Naive thymus-derived CD4-positive, alpha-beta T cell (primary cell): ENCODE measurements at regions of chr2 and their contacts with region 1.

Region 1: GRCh38 chr2:9630749-9631483 is at the start of gene YWHAQ:
- DNase-seq: peak; percentile 92 to 98 (median 96)
- ATAC-seq: peak; percentile 95
- H3K4me3 ChIP-seq: peak within 1 kb of the TSS; percentile 75
- H3K4me3 Mint-ChIP-seq: peak within 1 kb of the TSS; percentile 90 to 99 (median 96)
- H3K27ac ChIP-seq: peak within 1 kb of the TSS; percentile 94
- H3K27ac Mint-ChIP-seq: peak within 1 kb of the TSS; percentile 78 to 97 (median 94)
- H3K4me1 ChIP-seq: peaks cover 13 to 22% of the 10 kb centered on the region in 2 donors
- H3K4me1 Mint-ChIP-seq: peaks cover 39 to 52% (median 51%) of the 10 kb centered on the region in 7 donors
- H3K27me3 ChIP-seq: no peaks in the 10 kb centered on the region
- H3K27me3 Mint-ChIP-seq: peaks cover 0 to 15% (median 0%) of the 10 kb centered on the region in 5 donors
- total RNA-seq, gene YWHAQ: 67.3 to 189 (median 83.3) TPM

Region 2: DNA sequence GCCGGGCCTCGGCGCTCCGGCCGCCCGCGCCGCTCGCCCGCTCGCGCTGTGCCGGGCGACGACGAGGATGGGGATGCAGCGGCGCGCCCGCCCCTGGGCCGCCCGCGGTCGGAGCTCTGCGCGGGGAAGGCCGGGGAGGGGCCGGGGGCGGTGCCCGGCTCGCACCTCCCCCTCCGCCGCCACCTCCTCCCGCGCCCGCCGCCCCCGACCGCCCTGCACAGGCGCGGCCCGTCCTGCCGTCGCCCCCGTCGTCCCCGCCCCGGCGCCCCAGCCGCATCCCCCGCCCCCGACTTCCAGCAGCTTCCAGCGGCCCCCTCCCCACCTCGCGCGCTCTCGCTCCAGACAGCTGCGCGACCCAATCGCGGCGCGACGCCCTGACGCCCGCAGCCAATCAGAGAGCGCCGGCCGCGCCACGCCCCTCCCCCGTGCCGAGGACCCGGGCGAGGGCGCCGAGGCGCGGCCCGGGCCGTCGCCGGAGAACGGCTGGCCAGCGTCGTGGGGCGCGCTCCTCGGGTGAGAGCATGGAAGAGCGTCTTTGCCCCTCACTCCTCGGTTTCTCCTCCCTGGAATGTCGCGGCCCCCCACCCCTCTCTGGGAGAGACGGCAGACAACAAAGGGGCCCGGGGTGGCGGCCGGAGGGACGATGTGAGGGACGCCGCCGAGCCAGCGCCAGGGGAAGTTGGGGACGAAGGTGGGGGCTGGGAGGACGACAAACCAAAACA is 627.1 kb before region 1 on chr2 and contains the start of gene MBOAT2:
- CTCF ChIA-PET with region 1: no interaction called
- POLR2A ChIA-PET with region 1: no interaction called
- intact Hi-C with region 1: loop called in 1 of 2 experiments (anchors 5 kb)
- DNase-seq: peak; percentile 60 to 84 (median 71)
- ATAC-seq: peak; percentile 92
- H3K4me3 ChIP-seq: peak within 1 kb of the TSS; percentile 60
- H3K4me3 Mint-ChIP-seq: peak within 1 kb of the TSS; percentile 77 to 92 (median 86)
- H3K27ac ChIP-seq: peak within 1 kb of the TSS; percentile 62
- H3K27ac Mint-ChIP-seq: peak within 1 kb of the TSS in 8 of 9 donors; percentile 56 to 86 (median 76)
- H3K4me1 ChIP-seq: peaks cover 0 to 3% of the 10 kb centered on the region in 2 donors
- H3K4me1 Mint-ChIP-seq: peaks cover 13 to 25% (median 22%) of the 10 kb centered on the region in 7 donors
- H3K27me3 ChIP-seq: peaks cover 0 to 3% of the 10 kb centered on the region in 2 donors
- H3K27me3 Mint-ChIP-seq: peaks cover 0 to 18% (median 4%) of the 10 kb centered on the region in 5 donors
- total RNA-seq, gene MBOAT2: 1.4 to 6.0 (median 2.3) TPM

Region 3: GRCh38 chr2:9440058-9440727 is 190.7 kb before region 1 on chr2:
- CTCF ChIA-PET with region 1: no interaction called
- POLR2A ChIA-PET with region 1: no interaction called
- intact Hi-C with region 1: no loop called
- DNase-seq: no peak
- ATAC-seq: no peak
- H3K4me3 ChIP-seq: no peak overlapping the region
- H3K4me3 Mint-ChIP-seq: no peak overlapping the region
- H3K27ac ChIP-seq: no peak overlapping the region
- H3K27ac Mint-ChIP-seq: no peak overlapping the region
- H3K4me1 ChIP-seq: no peaks in the 10 kb centered on the region
- H3K4me1 Mint-ChIP-seq: peaks cover 0 to 4% (median 0%) of the 10 kb centered on the region in 7 donors
- H3K27me3 ChIP-seq: no peaks in the 10 kb centered on the region
- H3K27me3 Mint-ChIP-seq: no peaks in the 10 kb centered on the region

Region 4: DNA sequence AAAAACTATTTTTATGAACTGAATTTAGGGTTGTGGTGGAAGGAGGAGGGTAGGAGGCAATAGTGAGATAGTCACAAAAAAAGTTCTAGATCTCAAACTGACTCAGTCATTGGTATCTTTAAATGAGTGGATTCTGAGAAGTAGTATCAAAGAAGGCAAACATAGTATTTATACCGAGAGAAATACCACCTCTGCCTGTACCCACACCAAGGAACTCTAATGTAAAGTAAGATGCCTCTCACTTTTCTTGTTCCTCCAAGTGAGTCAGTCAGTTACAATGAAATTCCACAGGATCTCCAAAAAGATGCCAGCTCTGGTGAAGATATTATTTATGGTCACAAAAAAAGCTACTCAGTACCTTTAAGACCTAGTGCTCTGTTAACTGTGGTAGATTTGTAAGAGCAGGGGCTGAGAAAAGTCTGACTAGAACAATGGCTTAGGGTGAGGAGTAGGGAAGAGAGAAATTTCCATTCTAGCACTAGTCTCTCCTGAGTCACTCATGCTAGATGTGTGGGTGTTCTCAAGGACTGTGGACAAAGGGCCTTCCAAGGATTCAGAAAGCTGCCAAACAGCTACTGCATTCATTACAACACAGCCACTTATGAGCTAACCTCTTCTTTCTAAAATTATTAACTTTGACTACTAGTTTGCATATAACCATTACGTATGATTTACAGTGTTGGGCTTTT is 36.4 kb before region 1 on chr2:
- CTCF ChIA-PET with region 1: no interaction called
- POLR2A ChIA-PET with region 1: no interaction called
- intact Hi-C with region 1: loop called in 1 of 2 experiments (anchors 5 kb)
- DNase-seq: no peak
- ATAC-seq: peak; percentile 14
- H3K4me3 ChIP-seq: no peak overlapping the region
- H3K4me3 Mint-ChIP-seq: peak overlapping the region in 1 of 10 donors; percentile 54
- H3K27ac ChIP-seq: no peak overlapping the region
- H3K27ac Mint-ChIP-seq: peak overlapping the region in 5 of 9 donors; percentile 0 to 53 (median 23)
- H3K4me1 ChIP-seq: peaks cover 4 to 22% of the 10 kb centered on the region in 2 donors
- H3K4me1 Mint-ChIP-seq: peaks cover 24 to 56% (median 43%) of the 10 kb centered on the region in 7 donors
- H3K27me3 ChIP-seq: no peaks in the 10 kb centered on the region
- H3K27me3 Mint-ChIP-seq: no peaks in the 10 kb centered on the region

Region 5: DNA sequence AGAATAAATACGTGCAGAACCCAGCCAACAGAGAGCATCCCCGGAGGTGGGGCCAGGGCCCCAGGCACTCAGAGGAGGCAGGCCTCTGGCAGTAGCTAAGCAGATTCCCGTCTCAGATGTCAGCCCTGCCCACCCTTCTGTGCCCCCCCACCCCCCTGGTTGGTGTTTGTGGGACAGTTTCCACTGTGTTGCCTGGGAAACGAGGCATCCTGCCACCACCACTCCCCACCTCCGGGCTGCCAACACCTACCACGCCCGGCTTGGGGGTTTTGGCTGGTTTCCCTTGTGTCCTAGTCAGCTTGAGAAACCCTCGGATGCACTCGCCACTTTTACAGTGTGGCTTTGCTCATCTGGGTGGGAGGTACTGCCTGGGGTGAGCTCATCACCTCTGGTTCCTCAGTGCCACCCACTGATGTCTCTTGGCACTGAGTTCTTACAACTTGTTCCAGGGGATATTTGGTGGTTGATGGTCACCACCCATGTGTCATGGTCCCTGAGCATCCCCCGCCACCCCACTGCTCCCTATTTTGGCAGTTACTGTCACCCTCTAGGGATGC is 72.2 kb after region 1 on chr2:
- CTCF ChIA-PET with region 1: no interaction called
- POLR2A ChIA-PET with region 1: no interaction called
- intact Hi-C with region 1: loop called (anchors 1 to 5 kb)
- DNase-seq: peak in 8 of 9 donors; percentile 7 to 77 (median 44)
- ATAC-seq: peak; percentile 90
- H3K4me3 ChIP-seq: peak overlapping the region; percentile 16
- H3K4me3 Mint-ChIP-seq: peak overlapping the region in 2 of 10 donors; percentile 23 to 26
- H3K27ac ChIP-seq: no peak overlapping the region
- H3K27ac Mint-ChIP-seq: peak overlapping the region in 1 of 9 donors; percentile 78
- H3K4me1 ChIP-seq: peaks cover 7 to 31% of the 10 kb centered on the region in 2 donors
- H3K4me1 Mint-ChIP-seq: peaks cover 8 to 39% (median 13%) of the 10 kb centered on the region in 7 donors
- H3K27me3 ChIP-seq: no peaks in the 10 kb centered on the region
- H3K27me3 Mint-ChIP-seq: peaks cover 0 to 4% (median 0%) of the 10 kb centered on the region in 5 donors

Region 6: DNA sequence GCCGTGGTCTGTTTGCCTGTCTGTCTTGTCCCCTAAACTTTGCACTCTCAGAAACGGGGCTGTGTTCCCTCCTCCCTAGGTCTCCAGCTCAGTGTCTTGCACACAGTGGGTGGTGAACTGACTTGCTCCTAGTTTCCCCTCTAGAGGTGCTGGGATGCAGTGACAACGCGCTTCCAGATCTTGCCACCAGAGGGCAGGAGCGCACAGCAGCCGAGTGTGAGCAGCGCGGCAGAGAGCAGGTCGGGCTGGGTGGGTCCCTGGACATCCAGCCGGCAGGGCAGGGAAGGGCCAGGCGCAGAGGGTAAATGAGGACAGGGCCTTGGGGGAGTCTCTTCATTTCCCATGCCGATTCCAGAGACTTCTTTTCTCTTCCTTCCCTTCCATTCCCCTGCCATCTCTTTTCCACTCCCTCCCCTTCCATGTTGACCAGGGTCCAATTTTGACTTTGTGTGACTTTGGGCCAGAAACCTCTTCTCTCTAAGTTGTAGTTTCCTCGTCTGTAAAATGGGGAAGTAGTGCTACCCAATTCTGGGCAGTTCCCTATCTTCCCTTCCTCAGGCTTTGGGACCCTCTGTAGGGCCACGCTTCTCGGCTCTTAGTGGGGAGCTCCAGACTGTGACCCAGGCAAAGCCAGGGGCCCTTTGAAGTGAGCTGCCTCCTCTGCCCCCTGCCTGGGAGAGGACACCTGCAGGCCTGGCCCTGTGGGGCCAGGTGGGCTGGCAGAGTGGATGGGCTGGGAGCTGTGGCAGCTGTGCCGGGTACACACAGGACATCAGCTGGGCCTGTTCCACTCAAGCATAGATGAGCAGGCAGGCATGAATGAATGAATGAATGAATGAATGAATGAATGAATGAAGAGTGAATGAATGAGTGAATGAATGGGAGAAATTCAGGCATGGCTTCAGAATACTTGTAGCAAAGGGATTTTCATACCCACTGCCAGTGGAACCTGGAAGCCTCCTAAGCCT is 169.0 kb after region 1 on chr2:
- CTCF ChIA-PET with region 1: no interaction called
- POLR2A ChIA-PET with region 1: no interaction called
- intact Hi-C with region 1: loop called in 1 of 2 experiments (anchors 1 kb)
- DNase-seq: peak; percentile 55 to 89 (median 76)
- ATAC-seq: peak; percentile 91
- H3K4me3 ChIP-seq: peak overlapping the region; percentile 10
- H3K4me3 Mint-ChIP-seq: peak overlapping the region; percentile 4 to 89 (median 60)
- H3K27ac ChIP-seq: no peak overlapping the region
- H3K27ac Mint-ChIP-seq: peak overlapping the region in 5 of 9 donors; percentile 7 to 85 (median 28)
- H3K4me1 ChIP-seq: peaks cover 9 to 12% of the 10 kb centered on the region in 2 donors
- H3K4me1 Mint-ChIP-seq: peaks cover 11 to 29% (median 14%) of the 10 kb centered on the region in 7 donors
- H3K27me3 ChIP-seq: no peaks in the 10 kb centered on the region
- H3K27me3 Mint-ChIP-seq: peaks cover 0 to 10% (median 0%) of the 10 kb centered on the region in 5 donors

Region 7: DNA sequence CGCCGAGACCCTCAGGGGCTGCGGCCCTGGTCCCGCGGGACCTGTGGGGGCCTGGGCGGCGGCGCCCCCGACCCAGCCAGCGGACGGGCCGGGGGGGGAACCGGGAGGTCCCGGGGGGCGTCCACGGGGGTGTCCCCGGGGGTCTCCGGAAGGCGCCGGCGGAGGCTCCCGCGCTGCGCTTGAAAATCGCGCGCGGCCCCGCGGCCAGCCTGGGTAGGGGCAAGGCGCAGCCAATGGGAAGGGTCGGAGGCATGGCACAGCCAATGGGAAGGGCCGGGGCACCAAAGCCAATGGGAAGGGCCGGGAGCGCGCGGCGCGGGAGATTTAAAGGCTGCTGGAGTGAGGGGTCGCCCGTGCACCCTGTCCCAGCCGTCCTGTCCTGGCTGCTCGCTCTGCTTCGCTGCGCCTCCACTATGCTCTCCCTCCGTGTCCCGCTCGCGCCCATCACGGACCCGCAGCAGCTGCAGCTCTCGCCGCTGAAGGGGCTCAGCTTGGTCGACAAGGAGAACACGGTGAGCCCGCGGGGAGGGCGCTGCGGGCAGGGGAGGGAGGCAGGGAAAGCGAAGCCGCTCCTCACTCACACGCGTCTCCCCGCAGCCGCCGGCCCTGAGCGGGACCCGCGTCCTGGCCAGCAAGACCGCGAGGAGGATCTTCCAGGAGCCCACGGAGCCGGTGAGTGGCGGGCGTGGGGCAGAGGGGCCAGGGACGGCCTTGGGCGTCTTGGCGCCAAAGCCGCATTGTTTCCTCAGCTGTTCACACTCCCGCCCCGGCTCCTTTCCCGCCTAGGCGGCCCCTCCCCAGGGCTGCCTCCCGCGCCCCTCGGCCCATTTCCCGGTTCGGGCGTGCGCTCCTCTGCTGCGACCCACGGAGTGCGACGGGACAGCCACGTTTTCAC is 491.7 kb after region 1 on chr2 and contains the start of gene RRM2:
- CTCF ChIA-PET with region 1: no interaction called
- POLR2A ChIA-PET with region 1: no interaction called
- intact Hi-C with region 1: loop called (anchors 5 to 10 kb)
- DNase-seq: peak; percentile 74 to 94 (median 84)
- ATAC-seq: peak; percentile 82
- H3K4me3 ChIP-seq: peak within 1 kb of the TSS; percentile 55
- H3K4me3 Mint-ChIP-seq: peak within 1 kb of the TSS; percentile 80 to 99 (median 98)
- H3K27ac ChIP-seq: peak within 1 kb of the TSS; percentile 34
- H3K27ac Mint-ChIP-seq: peak within 1 kb of the TSS in 6 of 9 donors; percentile 17 to 99 (median 69)
- H3K4me1 ChIP-seq: peaks cover 24 to 29% of the 10 kb centered on the region in 2 donors
- H3K4me1 Mint-ChIP-seq: peaks cover 21 to 76% (median 41%) of the 10 kb centered on the region in 7 donors
- H3K27me3 ChIP-seq: peaks cover 0 to 7% of the 10 kb centered on the region in 2 donors
- H3K27me3 Mint-ChIP-seq: peaks cover 0 to 24% (median 10%) of the 10 kb centered on the region in 5 donors
- total RNA-seq, gene RRM2: 0.13 to 330 (median 0.51) TPM